Activated CD4-positive, alpha-beta memory T cell treated with anti-CD3 and anti-CD28 coated beads for 36 hours (primary cell): ENCODE measurements at regions of chr1 and their contacts with region 1.

Region 1: GRCh38 chr1:111399792-111400610 is 27.5 kb downstream of the OVGP1 start:
- DNase-seq: peak; percentile 40
- H3K4me3 Mint-ChIP-seq: no peak overlapping the region
- H3K27ac Mint-ChIP-seq: no peak overlapping the region
- H3K4me1 Mint-ChIP-seq: peaks cover 29% of the 10 kb centered on the region
- H3K27me3 Mint-ChIP-seq: no peaks in the 10 kb centered on the region

Region 2: GRCh38 chr1:111030590-111030989 is 369.4 kb before region 1 on chr1:
- CTCF ChIA-PET with region 1: interaction called, 27 read pairs
- POLR2A ChIA-PET with region 1: no interaction called
- intact Hi-C with region 1: loop called (anchors 5 kb)
- DNase-seq: peak; percentile 53
- H3K4me3 Mint-ChIP-seq: no peak overlapping the region
- H3K27ac Mint-ChIP-seq: no peak overlapping the region
- H3K4me1 Mint-ChIP-seq: no peaks in the 10 kb centered on the region
- H3K27me3 Mint-ChIP-seq: peaks cover 10% of the 10 kb centered on the region

Region 3: DNA sequence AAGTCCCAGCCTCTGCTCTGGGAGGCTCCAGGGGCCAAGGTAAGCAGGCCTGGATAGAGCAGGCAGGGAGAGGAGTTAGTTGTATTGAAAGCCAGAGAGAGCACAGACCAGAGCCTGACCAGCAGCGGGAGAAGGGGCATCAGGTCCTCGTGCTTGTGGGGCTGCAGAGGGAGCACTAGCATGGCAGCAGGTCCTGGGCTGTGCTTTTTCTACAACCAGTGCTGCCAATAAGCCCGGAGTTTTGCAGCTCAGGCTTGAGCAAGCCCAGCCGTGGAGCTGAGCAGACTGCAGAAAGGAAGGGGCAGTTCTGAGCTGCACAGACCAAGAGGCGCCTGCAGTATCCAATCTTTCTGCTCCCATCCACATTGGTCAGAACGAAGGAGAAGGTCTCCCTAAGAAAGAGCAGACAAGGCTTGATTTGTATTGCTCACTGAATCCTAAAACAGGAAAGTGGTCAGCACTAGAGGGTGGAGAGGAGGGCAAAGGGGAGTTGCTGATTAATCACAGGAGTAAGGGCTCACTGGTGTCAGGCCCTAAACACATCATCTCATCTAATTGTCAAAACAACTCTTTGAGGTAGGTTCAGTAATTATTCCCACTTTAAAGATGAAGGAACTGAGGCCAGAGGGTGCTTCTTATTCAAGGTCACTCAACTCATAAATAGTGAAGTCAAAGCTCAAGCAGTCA is 202.3 kb before region 1 on chr1:
- CTCF ChIA-PET with region 1: interaction called, 16 read pairs
- POLR2A ChIA-PET with region 1: no interaction called
- intact Hi-C with region 1: no loop called
- DNase-seq: peak; percentile 68
- H3K4me3 Mint-ChIP-seq: peak overlapping the region; percentile 92
- H3K27ac Mint-ChIP-seq: peak overlapping the region; percentile 97
- H3K4me1 Mint-ChIP-seq: peaks cover 72% of the 10 kb centered on the region
- H3K27me3 Mint-ChIP-seq: no peaks in the 10 kb centered on the region

Region 4: DNA sequence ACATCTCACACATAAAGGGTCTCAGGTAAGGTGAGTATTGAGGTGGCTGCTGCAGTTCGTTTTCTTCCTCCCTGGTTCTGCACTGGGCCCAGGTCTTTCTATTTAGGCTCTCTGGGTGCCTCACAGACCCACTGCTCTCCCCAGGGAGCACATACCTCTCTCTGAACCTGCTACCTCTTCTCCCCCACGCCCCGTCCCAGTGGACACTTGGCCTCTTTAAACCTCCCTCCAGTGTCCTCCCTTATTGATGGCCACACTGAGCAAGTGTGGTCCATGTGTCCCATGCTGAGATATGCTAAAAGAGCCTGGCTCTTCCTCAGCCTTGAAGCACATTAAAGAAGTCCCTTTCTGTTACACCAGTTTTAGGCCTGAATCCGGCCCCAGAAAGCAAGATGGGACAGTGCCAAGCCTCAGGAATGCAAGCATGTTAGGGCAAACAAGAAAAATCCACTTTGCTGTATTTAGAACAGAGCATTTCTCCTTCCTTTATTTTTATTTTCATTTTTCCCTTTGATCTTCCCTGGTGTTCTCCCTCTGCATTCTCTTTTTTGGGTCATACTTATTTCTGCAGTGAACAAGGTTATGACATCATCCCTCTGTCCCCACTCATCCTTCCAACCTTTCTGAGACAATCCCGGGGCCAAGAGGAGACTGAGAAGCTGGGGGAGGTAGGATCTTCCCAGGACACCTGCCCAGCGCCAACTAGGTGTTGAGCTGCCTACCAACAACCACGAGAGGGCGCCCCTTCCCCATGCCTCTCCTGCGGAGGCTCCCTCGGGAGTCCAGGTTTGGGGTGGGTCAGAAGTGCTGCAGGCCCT is 177.5 kb before region 1 on chr1:
- CTCF ChIA-PET with region 1: interaction called, 169 read pairs
- POLR2A ChIA-PET with region 1: interaction called, 3 read pairs
- intact Hi-C with region 1: loop called (anchors 1 kb)
- DNase-seq: peak; percentile 89
- H3K4me3 Mint-ChIP-seq: peak overlapping the region; percentile 61
- H3K27ac Mint-ChIP-seq: peak overlapping the region; percentile 95
- H3K4me1 Mint-ChIP-seq: peaks cover 91% of the 10 kb centered on the region
- H3K27me3 Mint-ChIP-seq: no peaks in the 10 kb centered on the region

Region 5: GRCh38 chr1:111346089-111346885 is 53.7 kb before region 1 on chr1:
- CTCF ChIA-PET with region 1: interaction called, 15 read pairs
- POLR2A ChIA-PET with region 1: interaction called, 3 read pairs
- intact Hi-C with region 1: no loop called
- DNase-seq: peak; percentile 89
- H3K4me3 Mint-ChIP-seq: peak overlapping the region; percentile 78
- H3K27ac Mint-ChIP-seq: peak overlapping the region; percentile 30
- H3K4me1 Mint-ChIP-seq: peaks cover 9% of the 10 kb centered on the region
- H3K27me3 Mint-ChIP-seq: no peaks in the 10 kb centered on the region

Region 6: GRCh38 chr1:111441573-111442192 is 41.7 kb after region 1 on chr1:
- CTCF ChIA-PET with region 1: interaction called, 8 read pairs
- POLR2A ChIA-PET with region 1: no interaction called
- intact Hi-C with region 1: loop called (anchors 5 kb)
- DNase-seq: peak; percentile 75
- H3K4me3 Mint-ChIP-seq: no peak overlapping the region
- H3K27ac Mint-ChIP-seq: peak overlapping the region; percentile 63
- H3K4me1 Mint-ChIP-seq: peaks cover 46% of the 10 kb centered on the region
- H3K27me3 Mint-ChIP-seq: no peaks in the 10 kb centered on the region

Region 7: GRCh38 chr1:111769517-111770146 is 369.6 kb after region 1 on chr1:
- CTCF ChIA-PET with region 1: interaction called, 5 read pairs
- POLR2A ChIA-PET with region 1: no interaction called
- intact Hi-C with region 1: loop called (anchors 5 kb)
- DNase-seq: peak; percentile 44
- H3K4me3 Mint-ChIP-seq: no peak overlapping the region
- H3K27ac Mint-ChIP-seq: no peak overlapping the region
- H3K4me1 Mint-ChIP-seq: peaks cover 3% of the 10 kb centered on the region
- H3K27me3 Mint-ChIP-seq: no peaks in the 10 kb centered on the region